CD8-positive, alpha-beta memory T cell (primary cell): ENCODE measurements at regions of chr19 and their contacts with region 1.

Region 1: GRCh38 chr19:14081325-14082093 is 4.1 kb downstream of the C19orf67 start:
- DNase-seq: peak; percentile 97 to 100 (median 99)
- H3K4me3 ChIP-seq: peak overlapping the region; percentile 84
- H3K4me3 Mint-ChIP-seq: peak overlapping the region; percentile 84 to 96 (median 94)
- H3K27ac ChIP-seq: peak overlapping the region; percentile 87
- H3K27ac Mint-ChIP-seq: peak overlapping the region; percentile 82 to 98 (median 96)
- H3K4me1 ChIP-seq: peaks cover 18% of the 10 kb centered on the region
- H3K4me1 Mint-ChIP-seq: peaks cover 14 to 29% (median 20%) of the 10 kb centered on the region in 3 donors
- H3K27me3 ChIP-seq: no peaks in the 10 kb centered on the region
- H3K27me3 Mint-ChIP-seq: no peaks in the 10 kb centered on the region

Region 2: DNA sequence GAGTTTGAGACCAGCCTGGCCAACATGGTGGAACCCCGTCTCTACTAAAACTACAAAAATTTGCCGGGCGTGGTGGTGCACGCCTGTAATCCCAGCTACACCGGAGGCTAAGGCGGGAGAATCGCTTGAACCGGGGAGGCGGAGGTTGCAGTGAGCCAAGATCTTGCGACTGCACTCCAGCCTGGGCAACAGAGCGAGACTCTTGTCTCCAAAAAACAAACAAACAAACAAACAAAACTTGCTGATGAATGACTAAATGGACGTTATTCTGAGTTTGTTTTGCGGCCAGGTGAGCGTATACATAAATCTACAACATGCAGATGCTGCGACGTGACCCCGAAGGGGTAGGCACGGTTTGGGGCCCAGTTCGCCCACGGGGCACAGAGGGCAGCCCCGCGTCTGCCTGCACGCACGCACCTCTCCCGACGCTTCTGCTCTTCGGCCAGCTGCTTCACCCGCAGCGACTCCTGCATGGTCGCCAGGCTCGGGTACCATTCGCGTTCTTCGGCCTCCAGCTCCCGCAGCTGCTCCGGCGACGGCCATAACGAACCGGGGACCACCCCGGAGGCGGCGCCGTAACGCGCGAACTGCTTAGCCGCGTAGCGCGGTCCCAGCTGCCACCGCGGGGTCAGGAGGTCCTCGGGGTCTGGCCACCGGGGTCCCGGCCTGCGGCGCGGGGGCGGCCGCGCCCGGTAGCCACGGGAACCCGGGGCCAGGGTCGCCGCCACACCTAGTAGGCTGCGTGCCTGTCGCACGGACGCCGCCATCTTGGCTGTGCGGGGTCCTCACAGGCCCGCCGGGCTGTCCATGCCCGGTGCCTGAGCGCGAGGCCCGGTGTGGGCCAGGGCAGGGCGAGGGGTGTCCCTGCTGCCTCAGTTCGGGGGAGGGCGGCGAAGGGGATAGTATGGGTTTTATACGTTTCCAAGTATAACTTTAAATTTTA is 1124.8 kb before region 1 on chr19 and contains the start of gene GADD45GIP1:
- CTCF ChIA-PET with region 1: no interaction called
- POLR2A ChIA-PET with region 1: interaction called, 13 read pairs
- DNase-seq: peak; percentile 63 to 85 (median 75)
- H3K4me3 ChIP-seq: peak within 1 kb of the TSS; percentile 73
- H3K4me3 Mint-ChIP-seq: peak within 1 kb of the TSS; percentile 86 to 93 (median 89)
- H3K27ac ChIP-seq: peak within 1 kb of the TSS; percentile 67
- H3K27ac Mint-ChIP-seq: peak within 1 kb of the TSS; percentile 65 to 95 (median 92)
- H3K4me1 ChIP-seq: peaks cover 15% of the 10 kb centered on the region
- H3K4me1 Mint-ChIP-seq: peaks cover 22 to 30% (median 24%) of the 10 kb centered on the region in 3 donors
- H3K27me3 ChIP-seq: no peaks in the 10 kb centered on the region
- H3K27me3 Mint-ChIP-seq: no peaks in the 10 kb centered on the region
- total RNA-seq, gene GADD45GIP1: 37.3 to 38.6 TPM

Region 3: GRCh38 chr19:13880059-13881043 is 201.2 kb before region 1 on chr19:
- CTCF ChIA-PET with region 1: interaction called, 10 read pairs
- POLR2A ChIA-PET with region 1: no interaction called
- DNase-seq: peak; percentile 93 to 99 (median 98)
- H3K4me3 ChIP-seq: peak overlapping the region; percentile 52
- H3K4me3 Mint-ChIP-seq: peak overlapping the region; percentile 54 to 83 (median 72)
- H3K27ac ChIP-seq: peak overlapping the region; percentile 74
- H3K27ac Mint-ChIP-seq: peak overlapping the region in 7 of 8 donors; percentile 88 to 92 (median 91)
- H3K4me1 ChIP-seq: peaks cover 48% of the 10 kb centered on the region
- H3K4me1 Mint-ChIP-seq: peaks cover 33 to 49% (median 37%) of the 10 kb centered on the region in 3 donors
- H3K27me3 ChIP-seq: no peaks in the 10 kb centered on the region
- H3K27me3 Mint-ChIP-seq: no peaks in the 10 kb centered on the region